ENCODE measurements at regions of chr7 and their contacts with region 1.

Region 1: DNA sequence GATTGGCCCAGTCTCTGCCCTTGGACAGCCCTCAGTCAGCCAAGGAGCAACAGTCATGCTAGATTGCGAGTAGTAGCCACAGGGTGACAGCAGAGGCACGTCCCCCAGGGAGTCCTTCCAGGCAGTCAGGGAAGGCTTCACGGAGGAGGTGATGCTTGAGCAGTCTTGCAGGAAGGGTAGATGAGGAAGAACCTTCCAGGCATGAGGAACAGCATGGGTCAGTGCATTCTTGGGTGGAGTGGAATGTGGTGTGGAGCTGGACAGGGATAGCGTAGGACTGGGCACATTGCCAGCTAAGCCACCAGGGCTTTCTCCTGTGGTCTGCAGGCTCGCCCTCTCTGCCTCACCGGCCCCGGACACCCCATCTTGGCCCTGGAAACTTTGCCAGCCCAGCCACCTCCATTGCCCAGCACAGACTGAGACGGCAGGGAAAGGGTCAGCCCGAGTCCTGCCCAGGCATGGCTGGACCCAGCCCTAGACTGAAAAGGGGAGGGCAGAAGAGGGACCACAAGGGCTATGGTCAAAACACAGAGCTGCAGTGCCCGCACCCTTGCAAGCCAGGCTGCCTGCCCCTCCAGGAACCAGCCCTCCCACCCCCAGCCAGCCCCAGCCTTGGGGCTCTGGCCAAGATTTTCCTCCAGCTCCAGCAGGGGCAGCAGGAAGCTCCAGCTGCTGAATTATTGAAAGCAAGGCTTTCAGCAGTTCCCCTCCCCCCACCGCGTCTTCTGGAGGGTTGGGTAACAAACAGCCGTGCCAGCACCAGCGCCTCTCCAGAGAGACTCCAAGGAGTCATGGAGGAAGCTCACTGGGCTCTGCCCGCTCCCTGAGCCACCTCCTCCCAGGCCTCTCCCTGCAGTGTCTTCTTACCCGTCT is 18.7 kb downstream of the SRRM3 start:
- DNase-seq: peak in 2 of 4 experiments; percentile 46 to 52
- ATAC-seq: peak; percentile 89
- H3K4me3 ChIP-seq: no peak overlapping the region
- H3K27ac ChIP-seq: no peak overlapping the region
- H3K4me1 ChIP-seq: peaks cover 0 to 4% of the 10 kb centered on the region in 2 experiments; a peak in 1 of 5 replicates
- H3K27me3 ChIP-seq: peaks cover 16 to 63% of the 10 kb centered on the region in 2 experiments; a peak in 4 of 5 replicates
- CTCF ChIP-seq: peak; percentile 59 to 73 (median 65); a peak in 5 of 6 replicates
- EP300 ChIP-seq: no peak
- POLR2A ChIP-seq: no peak
- RAD21 ChIP-seq: peak; percentile 37 to 76

Region 2: DNA sequence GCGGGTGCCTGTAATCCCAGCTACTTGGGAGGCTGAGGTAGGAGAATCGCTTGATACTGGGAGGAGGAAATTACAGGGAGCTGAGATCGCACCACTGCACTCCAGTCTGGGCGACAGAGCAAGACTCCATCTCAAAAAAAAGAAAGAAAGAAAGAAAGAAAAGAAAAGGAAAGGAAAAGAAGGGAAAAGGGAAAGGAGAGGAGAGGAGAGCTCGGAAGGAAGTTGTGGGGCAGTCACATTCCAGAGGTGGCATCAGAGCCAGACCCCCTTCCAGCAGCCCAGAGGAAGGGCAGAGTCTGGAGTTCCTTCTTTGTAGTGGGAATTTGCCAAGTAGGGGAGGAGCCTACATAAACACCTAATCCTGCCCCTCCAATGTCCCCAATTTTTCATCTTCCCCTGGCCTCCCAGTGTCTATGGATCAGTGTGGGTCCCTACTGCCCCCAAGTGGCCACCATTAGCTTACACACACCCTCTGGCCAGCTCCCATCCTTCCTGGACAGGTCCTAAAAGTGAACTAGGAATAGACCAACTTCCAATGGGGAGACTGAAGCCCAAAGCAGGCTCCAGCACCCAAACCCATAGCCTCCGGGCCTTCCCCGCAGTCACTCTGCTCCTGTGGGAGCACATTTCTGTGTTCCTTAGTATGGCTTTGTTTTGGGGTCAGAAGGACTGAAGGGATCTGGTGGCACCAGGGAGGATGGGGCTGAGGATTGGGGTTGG is 42.4 kb after region 1 on chr7:
- CTCF ChIA-PET with region 1: interaction called, 3 read pairs
- POLR2A ChIA-PET with region 1: interaction called, 3 read pairs
- in situ Hi-C with region 1: no loop called
- intact Hi-C with region 1: loop called (anchors 2 kb)
- DNase-seq: peak; percentile 69 to 86 (median 74)
- ATAC-seq: peak; percentile 83
- H3K4me3 ChIP-seq: no peak overlapping the region
- H3K27ac ChIP-seq: no peak overlapping the region
- H3K4me1 ChIP-seq: peaks cover 0 to 36% of the 10 kb centered on the region in 2 experiments; a peak in 4 of 5 replicates
- H3K27me3 ChIP-seq: peaks cover 4 to 25% of the 10 kb centered on the region in 2 experiments; a peak in 3 of 5 replicates
- CTCF ChIP-seq: peak; percentile 91 to 96 (median 95)
- EP300 ChIP-seq: no peak
- POLR2A ChIP-seq: no peak
- RAD21 ChIP-seq: peak; percentile 82 to 87